ENCODE measurements at regions of chr16 and their contacts with region 1.

Region 1: DNA sequence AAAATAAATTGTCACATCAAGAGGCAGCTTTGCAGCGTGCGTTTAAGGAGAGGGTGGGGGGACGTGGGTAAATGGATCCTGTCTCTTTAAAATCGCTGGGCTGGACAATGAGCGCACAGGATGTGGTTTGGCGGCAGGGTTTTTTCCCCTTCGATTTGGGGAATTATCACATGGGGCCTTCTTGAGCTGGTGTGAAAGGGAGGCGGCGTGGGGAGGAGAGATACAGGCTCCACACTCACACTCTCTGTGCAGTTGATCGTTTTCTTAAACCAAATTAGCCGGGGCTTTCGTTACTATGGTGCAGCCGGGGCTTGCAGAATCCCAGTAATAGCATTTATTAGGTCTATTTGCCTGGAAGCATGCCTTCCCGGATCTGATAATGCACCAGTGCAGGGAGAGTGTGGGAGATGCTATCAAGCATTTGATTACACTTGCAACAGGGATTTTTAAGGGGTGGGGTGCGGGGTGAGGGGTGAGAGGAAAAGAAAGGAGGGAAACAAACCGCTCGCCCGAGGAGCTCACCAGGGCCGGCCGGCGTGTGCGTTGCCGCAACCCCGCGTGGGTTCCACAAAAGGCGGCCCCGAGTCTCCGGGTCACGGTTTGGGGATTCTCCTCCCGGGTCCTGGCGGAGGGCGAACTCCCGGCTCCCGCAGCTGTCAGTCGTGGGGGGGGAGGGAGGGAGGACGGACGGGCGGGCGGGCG is 58.9 kb upstream of the GSE1 start:
- DNase-seq: peak; percentile 55 to 66
- ATAC-seq: peak; percentile 26 to 32
- H3K4me3 ChIP-seq: peak overlapping the region; percentile 88 to 98 (median 94)
- H3K27ac ChIP-seq: peak overlapping the region; percentile 95 to 96 (median 96)
- H3K4me1 ChIP-seq: peaks cover 34 to 37% of the 10 kb centered on the region in 2 donors
- H3K27me3 ChIP-seq: no peaks in the 10 kb centered on the region
- CTCF ChIP-seq: no peak
- POLR2A ChIP-seq: no peak

Region 2: GRCh38 chr16:85446951-85447692 is 107.1 kb before region 1 on chr16:
- in situ Hi-C with region 1: no loop called
- intact Hi-C with region 1: loop called (anchors 1 kb)
- DNase-seq: peak; percentile 59 to 82
- ATAC-seq: peak; percentile 56 to 75
- H3K4me3 ChIP-seq: no peak overlapping the region
- H3K27ac ChIP-seq: peak overlapping the region in 2 of 4 donors; percentile 18 to 69
- H3K4me1 ChIP-seq: peaks cover 25 to 27% of the 10 kb centered on the region in 2 donors
- H3K27me3 ChIP-seq: no peaks in the 10 kb centered on the region
- CTCF ChIP-seq: peak in 4 of 5 experiments; percentile 23 to 48 (median 31)
- POLR2A ChIP-seq: no peak

Region 3: DNA sequence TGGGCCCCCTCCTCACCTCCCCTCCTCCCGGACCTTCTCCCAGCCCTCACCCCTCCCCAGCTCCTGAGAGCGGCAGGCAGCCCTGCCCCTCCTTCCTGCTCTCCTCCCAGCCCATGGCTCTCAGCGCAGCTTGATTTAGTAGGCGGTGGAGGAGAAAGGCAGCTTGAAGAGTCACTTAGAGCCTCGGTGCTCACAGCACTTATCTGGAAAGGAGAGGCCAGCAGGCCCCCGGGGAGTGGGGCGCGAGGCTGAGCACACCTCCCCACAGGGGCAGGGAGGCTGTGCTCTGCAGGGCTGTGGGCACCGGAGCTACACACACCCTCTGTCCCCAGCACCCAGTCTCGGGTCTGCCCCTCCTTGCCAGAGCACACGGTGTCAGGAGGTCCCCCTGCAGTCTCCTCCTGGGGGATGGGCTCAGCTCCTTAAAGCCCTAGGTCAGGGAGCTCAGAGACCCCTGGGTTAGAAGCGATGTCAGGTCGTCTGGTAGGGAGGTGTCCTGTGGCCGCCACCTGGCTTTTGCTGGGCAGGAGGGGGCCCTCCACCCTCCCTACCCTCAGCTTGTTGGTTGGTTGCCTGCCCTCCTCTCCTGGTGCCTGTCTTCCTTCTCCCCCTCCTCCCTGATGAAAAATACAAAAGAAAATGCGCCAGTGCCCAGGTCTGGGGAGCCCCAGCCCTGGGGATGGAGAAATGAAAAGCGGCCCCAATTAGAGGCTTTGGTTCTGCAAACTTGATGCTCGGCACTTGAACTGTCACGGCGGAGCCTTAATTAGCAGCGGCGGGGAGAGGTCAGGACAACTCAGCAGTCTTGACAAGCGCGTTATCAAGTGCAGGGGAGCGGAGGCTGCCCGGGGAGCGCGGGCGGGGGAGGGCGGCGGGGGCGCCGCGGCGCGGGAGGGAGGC is 92.2 kb before region 1 on chr16:
- in situ Hi-C with region 1: no loop called
- intact Hi-C with region 1: loop called (anchors 5 kb)
- DNase-seq: no peak
- ATAC-seq: peak; percentile 10 to 18
- H3K4me3 ChIP-seq: peak overlapping the region; percentile 39 to 48 (median 42)
- H3K27ac ChIP-seq: peak overlapping the region; percentile 33 to 72 (median 55)
- H3K4me1 ChIP-seq: peaks cover 39 to 48% of the 10 kb centered on the region in 2 donors
- H3K27me3 ChIP-seq: no peaks in the 10 kb centered on the region
- CTCF ChIP-seq: no peak
- POLR2A ChIP-seq: no peak

Region 4: GRCh38 chr16:85491058-85491771 is 63.0 kb before region 1 on chr16:
- in situ Hi-C with region 1: no loop called
- intact Hi-C with region 1: loop called (anchors 2 kb)
- DNase-seq: no peak
- ATAC-seq: peak in 1 of 2 donors; percentile 23
- H3K4me3 ChIP-seq: no peak overlapping the region
- H3K27ac ChIP-seq: peak overlapping the region; percentile 72 to 76 (median 75)
- H3K4me1 ChIP-seq: peaks cover 17 to 20% of the 10 kb centered on the region in 2 donors
- H3K27me3 ChIP-seq: no peaks in the 10 kb centered on the region
- CTCF ChIP-seq: no peak
- POLR2A ChIP-seq: no peak

Region 5: DNA sequence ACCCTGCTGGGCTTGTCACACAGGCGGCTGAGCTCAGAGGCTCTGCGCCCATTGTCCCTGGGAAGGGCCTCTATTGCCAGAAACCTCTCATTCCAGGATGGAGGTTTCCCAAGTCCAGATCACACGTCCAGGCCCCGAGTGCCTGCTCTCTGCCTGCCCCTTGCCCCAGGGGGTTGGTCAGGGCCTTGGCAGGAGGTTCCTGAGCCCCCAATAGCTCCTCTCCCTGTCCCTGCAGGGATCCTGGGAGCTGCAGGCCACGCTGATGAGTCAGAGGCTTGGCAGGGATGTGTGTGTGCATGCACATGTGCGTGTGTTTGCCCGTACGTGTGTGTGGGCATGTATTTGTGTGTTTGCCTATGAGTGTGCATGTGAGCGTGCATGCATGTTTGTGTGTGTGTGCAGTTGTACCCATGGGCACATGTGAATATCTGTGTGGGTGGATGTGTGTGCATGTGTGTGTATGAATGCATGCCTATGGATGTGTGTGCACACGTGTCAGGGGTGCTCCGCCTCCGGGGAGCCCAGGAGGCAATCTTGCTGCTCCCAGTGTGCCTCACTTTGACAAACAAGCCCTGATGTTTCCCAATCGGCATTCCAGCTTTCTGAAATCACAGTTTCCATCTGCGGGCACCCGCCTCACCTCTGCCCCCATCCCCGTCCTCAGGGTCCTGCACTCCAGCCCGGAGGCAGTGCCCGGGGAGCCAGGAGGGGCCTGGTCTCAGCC is 39.5 kb before region 1 on chr16:
- in situ Hi-C with region 1: no loop called
- intact Hi-C with region 1: no loop called
- DNase-seq: peak; percentile 28 to 57
- ATAC-seq: peak; percentile 35 to 70
- H3K4me3 ChIP-seq: no peak overlapping the region
- H3K27ac ChIP-seq: peak overlapping the region in 2 of 4 donors; percentile 9 to 58
- H3K4me1 ChIP-seq: peaks cover 6 to 19% of the 10 kb centered on the region in 2 donors
- H3K27me3 ChIP-seq: no peaks in the 10 kb centered on the region
- CTCF ChIP-seq: no peak
- POLR2A ChIP-seq: no peak

Region 6: GRCh38 chr16:85610508-85611332 is 56.5 kb after region 1 on chr16:
- in situ Hi-C with region 1: loop called in 1 of 4 experiments (anchors 5 kb)
- intact Hi-C with region 1: loop called (anchors 1 kb)
- DNase-seq: peak; percentile 74 to 83
- ATAC-seq: peak; percentile 24 to 31
- H3K4me3 ChIP-seq: peak overlapping the region; percentile 66 to 96 (median 81)
- H3K27ac ChIP-seq: peak overlapping the region; percentile 91 to 99 (median 95)
- H3K4me1 ChIP-seq: peaks cover 34 to 35% of the 10 kb centered on the region in 2 donors
- H3K27me3 ChIP-seq: no peaks in the 10 kb centered on the region
- CTCF ChIP-seq: peak; percentile 99 to 100 (median 99)
- POLR2A ChIP-seq: no peak